HEK293 (cell line): ENCODE measurements at regions of chr4 and their contacts with region 1.

Region 1: GRCh38 chr4:41214136-41214824 is at the start of gene APBB2:
- H3K4me3 ChIP-seq: peak within 1 kb of the TSS; percentile 80
- H3K27ac ChIP-seq: peak within 1 kb of the TSS; percentile 81
- H3K4me1 ChIP-seq: no peaks in the 10 kb centered on the region
- CTCF ChIP-seq: peak; percentile 74

Region 2: DNA sequence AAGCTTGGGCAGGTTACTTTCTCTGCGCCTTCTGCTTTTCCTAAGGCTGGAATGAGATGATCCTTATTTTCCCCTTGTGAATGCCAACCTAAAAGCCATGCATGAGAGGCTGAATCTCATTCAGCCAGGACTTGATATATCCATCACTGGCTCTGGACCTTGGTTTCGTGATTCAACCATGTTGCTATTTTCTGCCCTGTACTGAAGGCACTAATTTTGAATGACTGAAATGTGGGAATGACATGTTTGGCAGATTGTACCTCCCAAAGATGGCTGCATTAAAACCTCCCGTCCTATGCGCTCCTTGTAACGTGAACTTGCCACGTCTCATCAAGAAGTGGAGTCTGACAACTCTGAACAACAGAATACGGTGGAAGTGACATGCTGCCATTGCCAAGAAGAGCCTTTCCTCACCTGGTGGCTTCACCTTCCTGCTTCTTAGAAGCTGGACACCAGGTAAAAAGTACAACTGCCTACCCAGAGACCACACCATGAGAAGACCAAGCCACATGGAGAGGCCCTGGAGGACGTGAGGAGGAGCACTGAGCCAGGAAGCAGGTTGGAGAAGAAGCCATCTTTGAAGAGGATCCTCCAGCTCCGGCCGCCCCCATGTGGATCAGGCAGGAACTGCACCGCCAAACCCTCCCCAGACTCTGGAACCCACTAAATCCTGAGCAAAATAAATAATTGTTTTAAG is 290.0 kb before region 1 on chr4:
- CTCF ChIA-PET with region 1: interaction called, 15 read pairs
- POLR2A ChIA-PET with region 1: interaction called, 3 read pairs
- H3K4me3 ChIP-seq: no peak overlapping the region
- H3K27ac ChIP-seq: no peak overlapping the region
- H3K4me1 ChIP-seq: no peaks in the 10 kb centered on the region
- CTCF ChIP-seq: 0 out of 2 replicates have a peak, but pooled peaks have one; percentile 29

Region 3: GRCh38 chr4:40931168-40931567 is 283.1 kb before region 1 on chr4:
- CTCF ChIA-PET with region 1: interaction called, 15 read pairs
- POLR2A ChIA-PET with region 1: interaction called, 3 read pairs
- H3K4me3 ChIP-seq: no peak overlapping the region
- H3K27ac ChIP-seq: no peak overlapping the region
- H3K4me1 ChIP-seq: no peaks in the 10 kb centered on the region
- CTCF ChIP-seq: no peak

Region 4: GRCh38 chr4:40976343-40976742 is 237.9 kb before region 1 on chr4:
- CTCF ChIA-PET with region 1: interaction called, 57 read pairs
- POLR2A ChIA-PET with region 1: interaction called, 3 read pairs
- H3K4me3 ChIP-seq: no peak overlapping the region
- H3K27ac ChIP-seq: no peak overlapping the region
- H3K4me1 ChIP-seq: no peaks in the 10 kb centered on the region
- CTCF ChIP-seq: no peak

Region 5: GRCh38 chr4:41257257-41257901 is 43.1 kb after region 1 on chr4:
- CTCF ChIA-PET with region 1: interaction called, 4 read pairs
- POLR2A ChIA-PET with region 1: interaction called, 25 read pairs
- H3K4me3 ChIP-seq: peak overlapping the region; percentile 50
- H3K27ac ChIP-seq: peak overlapping the region; percentile 86
- H3K4me1 ChIP-seq: no peaks in the 10 kb centered on the region
- CTCF ChIP-seq: no peak